ENCODE measurements at regions of chr2 and their contacts with region 1.

Region 1: DNA sequence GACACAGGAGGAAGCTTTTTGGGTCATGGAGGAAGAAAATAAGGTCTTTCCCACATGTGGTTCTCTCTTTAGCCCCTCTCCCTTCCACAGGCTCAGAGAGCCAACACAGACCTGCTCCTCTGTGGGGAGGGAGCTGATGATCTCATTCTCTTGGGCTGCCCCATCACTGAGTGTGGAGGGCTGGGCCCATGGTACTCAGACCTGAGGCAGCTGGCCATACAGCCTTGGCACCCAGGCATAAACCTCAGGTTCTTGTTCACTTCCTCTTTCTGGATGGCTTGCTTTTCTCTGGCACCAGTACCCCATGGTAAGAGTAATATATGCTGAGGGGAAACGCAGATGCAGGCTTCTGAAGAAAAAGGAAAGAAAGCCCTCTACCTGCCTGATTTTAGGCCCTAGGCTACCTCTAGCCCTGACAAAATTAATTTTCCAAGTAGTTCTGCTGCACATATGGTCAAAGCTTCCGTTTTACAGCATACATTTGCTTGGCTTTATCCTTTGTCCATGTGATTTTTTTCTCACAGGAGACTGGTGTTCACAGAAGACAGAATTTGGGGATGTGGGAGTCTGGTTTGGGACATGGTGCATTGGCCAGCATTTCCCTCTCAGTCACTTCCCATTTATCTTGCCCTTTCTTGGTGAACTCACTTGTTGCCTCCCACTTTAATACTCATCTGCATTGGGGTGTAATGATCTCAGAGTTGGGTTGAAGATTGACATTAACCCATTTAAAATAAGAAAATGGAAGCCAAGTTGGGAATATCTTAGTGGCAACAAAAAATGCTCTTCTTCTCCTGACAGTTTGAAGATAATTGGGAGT is 11.1 kb downstream of the DHRS9 start:
- DNase-seq: no peak
- ATAC-seq: peak in 2 of 4 donors; percentile 26 to 48
- H3K4me3 ChIP-seq: no peak overlapping the region
- H3K27ac ChIP-seq: peak overlapping the region in 1 of 12 donors; percentile 57
- H3K4me1 ChIP-seq: peaks cover 0 to 57% (median 9%) of the 10 kb centered on the region in 12 donors
- H3K27me3 ChIP-seq: no peaks in the 10 kb centered on the region
- CTCF ChIP-seq: no peak
- POLR2A ChIP-seq: no peak

Region 2: DNA sequence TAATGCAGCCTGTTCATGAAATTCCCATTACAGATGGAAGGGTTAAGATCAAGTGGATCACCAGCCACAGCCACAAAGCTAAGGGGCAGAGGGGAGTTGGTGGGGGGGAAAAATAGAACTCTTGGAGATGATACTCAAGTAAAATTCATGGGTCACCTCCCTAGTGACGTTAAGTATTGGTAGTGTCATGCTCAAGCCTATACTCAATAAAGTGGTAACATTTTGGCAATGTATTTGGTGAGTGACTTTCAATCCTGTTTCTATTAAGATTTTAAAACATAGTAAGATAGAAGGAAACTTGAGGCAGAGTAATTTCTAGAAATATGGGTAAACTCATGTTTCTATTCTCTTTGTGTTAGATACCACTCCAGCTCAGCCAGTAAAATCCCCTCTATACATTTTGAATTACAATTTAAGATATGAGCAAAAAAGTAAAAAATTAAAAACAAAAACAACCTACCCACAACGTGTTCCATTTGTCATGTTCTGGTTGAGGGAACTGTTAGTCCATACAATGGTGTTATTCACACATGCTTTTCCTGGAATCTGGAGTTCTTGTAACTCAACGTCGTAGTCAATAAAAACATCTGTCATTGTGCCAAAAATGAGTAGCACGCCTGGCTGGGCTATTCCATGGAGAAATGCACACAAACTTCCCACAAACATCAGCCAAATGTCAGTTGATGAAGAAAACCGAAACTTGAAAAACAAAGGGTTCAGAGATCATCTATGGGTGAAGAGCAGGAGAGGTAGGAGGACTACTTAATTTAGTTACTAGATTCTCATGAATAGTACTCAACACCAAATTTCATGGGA is 67.4 kb before region 1 on chr2:
- intact Hi-C with region 1: loop called in 1 of 10 experiments (anchors 5 kb)
- DNase-seq: no peak
- ATAC-seq: no peak
- H3K4me3 ChIP-seq: no peak overlapping the region
- H3K27ac ChIP-seq: peak overlapping the region in 9 of 12 donors; percentile 8 to 81 (median 72)
- H3K4me1 ChIP-seq: peaks cover 0 to 19% (median 5%) of the 10 kb centered on the region in 12 donors
- H3K27me3 ChIP-seq: no peaks in the 10 kb centered on the region
- CTCF ChIP-seq: no peak
- POLR2A ChIP-seq: no peak

Measured in heart left ventricle (tissue), 16 donors.